Right ventricle myocardium superior (tissue), 1 donor: ENCODE measurements at regions of chr12 and their contacts with region 1.

Region 1: DNA sequence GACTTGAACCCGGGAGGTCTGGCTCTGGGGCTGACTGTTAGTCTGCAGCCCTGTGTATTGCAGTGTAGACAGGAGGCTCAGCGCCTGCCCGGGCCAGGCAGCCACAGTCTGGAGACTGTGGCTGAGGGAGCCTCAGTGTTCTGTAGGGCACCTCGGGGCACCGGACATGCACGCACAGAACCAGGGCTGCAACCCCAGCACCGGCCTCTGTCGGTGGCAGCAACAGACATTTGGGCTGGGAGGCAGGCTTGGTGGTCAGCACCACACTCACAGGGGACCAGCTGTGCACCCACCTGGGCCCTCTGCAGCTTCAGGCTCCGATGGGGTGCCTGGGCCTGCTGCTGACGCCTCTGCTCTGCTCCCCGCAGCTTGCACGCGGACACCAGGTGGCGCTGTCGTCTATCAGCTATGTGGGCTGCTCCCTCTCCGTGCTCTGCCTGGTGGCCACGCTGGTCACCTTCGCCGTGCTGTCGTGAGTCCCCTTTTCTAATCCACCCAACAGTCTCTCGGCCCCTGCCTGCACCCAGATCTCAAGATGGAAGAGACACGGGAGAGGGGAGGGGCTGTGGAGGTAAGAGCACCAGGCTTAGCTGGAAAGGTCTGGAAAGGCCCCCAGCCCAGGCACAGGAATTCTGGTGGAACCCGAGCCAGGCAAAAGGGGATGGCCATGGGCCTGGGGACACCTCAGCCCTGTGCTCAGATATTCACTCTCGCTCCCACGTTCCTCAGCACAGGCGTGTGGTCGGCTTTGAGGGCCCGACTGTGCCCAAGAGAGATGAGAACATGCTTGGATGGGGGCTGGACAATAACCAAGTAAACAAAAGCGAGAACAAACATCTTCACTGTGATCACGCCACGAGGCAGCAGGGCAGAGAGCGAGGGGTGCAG is 151.0 kb downstream of the ADGRD1 start:
- DNase-seq: peak; percentile 93
- ATAC-seq: peak; percentile 91

Region 2: DNA sequence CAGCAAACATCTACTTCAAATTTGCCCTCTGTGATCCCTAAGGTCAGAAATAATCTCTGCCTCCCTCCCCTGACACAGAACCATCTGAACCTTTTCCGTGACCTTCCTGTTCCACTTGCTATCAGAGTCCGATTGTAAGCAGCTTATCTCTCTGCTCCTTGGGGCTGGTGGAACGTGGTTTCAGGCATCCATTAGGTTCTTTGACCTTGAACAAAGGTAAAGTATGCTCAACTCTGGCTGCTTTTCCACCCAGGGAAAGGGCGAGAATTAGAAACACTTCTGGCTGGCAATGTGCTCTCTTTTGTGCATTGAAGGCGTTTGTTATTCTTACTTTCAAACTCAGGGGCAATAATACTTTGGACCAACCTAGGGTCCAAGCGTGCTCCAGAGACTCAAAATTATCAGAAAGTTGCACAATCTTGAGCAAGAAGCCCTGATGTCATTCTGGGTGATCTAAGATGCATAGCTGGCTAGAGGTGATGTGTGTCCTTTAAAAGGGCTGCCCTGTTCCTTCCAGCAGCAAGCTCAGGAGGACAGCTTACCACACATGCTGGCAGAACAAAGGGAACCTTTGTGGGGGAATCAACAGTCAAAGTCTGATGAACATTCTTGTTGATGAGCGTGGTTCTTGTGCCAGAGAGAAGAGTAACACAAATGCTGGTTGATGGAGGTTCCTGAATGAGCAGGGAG is 121.2 kb before region 1 on chr12:
- intact Hi-C with region 1: no loop called
- DNase-seq: no peak
- ATAC-seq: peak; percentile 71

Region 3: GRCh38 chr12:131167334-131167733 is 62.6 kb after region 1 on chr12:
- intact Hi-C with region 1: no loop called
- DNase-seq: no peak
- ATAC-seq: no peak

Region 4: DNA sequence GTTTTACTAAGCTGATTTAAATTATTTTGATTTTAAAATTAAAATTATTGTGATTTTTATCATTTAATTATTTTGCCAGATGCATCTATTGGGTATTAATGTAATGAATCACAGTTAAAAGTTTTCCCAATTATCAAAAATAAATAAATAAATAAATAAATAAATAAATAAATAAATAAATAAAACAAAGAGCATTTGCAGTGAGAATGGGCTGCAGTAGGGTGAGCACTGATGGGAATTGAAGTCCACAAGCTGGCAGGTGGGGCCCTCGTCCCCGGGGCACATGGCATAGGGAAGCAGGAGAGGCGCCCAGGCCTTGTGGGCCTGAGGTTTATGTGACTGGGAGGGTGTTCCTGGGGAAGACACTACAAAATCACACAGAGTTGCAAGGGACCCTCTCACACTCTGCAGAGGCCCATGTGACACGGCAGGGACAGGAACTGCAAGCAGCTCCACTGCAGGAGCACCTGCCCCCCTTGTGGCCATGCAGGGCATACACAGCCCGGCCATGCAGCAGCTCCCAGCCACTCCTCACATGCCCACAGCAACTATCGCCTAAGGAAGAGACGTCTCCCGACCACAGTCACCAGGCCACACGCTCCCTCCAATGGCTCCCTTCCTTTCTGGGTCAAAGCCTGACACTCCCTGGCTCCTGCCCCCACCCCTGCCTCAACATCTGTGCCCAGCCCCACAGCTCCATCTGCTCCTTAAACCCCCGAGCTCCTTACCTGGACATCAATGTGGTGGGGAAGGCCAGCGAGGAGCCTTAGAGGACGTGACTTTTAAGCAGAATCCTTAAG is 349.9 kb after region 1 on chr12:
- intact Hi-C with region 1: loop called (anchors 10 kb)
- DNase-seq: no peak
- ATAC-seq: peak; percentile 85

Region 5: DNA sequence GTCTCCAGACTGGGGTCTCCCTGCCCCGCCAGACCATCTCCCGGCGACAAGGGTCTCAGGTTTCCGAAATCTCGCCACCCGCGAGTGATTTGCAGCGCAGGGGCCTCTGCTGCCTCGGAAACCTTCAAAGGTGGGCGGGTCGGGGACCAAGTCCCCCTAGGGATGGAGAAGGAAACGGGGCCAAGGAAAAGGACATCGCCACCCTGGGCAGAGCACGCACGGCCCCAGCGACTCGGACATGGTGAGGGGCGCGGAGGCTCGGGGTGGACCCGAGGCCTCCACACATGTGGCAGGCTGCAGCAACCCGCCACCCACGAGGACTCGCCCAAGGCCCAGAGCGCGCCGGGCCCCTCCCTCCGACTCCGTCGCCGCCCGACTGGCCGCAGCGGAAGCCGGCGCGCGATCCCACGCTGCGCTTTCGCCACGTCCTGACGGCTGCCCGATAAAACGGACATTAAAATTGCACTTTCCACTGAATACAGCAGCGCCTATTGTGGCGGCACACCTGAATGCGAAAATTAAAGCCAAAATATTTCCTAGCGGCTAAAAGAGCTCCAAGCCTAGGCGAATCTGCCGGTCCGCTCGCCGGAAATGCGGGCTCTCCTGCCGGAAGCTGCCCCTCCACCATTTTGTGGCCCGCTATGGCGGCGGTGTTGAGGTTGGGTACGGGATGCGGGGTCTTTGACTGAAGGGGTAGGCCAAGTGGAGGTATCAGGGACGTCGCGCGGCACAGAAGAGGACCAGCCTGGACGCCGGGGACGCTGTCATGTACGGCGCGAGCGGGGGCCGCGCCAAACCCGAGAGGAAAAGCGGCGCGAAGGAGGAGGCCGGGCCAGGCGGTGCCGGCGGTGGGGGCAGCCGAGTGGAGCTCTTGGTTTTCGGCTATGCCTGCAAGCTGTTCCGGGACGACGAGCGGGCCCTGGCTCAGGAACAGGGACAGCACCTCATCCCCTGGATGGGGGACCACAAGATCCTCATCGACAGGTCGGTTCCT is 606.1 kb after region 1 on chr12 and contains the start of gene SFSWAP:
- intact Hi-C with region 1: loop called (anchors 10 kb)
- DNase-seq: peak; percentile 87
- ATAC-seq: peak; percentile 99
- total RNA-seq, gene SFSWAP: 19.4 TPM